BJ (cell line): ENCODE measurements at regions of chr13 and their contacts with region 1.

Region 1: GRCh38 chr13:75549262-75550158 is at the start of gene UCHL3:
- DNase-seq: peak; percentile 46
- H3K4me3 ChIP-seq: peak within 1 kb of the TSS; percentile 96
- H3K27me3 ChIP-seq: no peaks in the 10 kb centered on the region
- CTCF ChIP-seq: peak; percentile 98
- polyA plus RNA-seq, gene UCHL3: 24.4 and 39.7 TPM in 2 replicates

Region 2: DNA sequence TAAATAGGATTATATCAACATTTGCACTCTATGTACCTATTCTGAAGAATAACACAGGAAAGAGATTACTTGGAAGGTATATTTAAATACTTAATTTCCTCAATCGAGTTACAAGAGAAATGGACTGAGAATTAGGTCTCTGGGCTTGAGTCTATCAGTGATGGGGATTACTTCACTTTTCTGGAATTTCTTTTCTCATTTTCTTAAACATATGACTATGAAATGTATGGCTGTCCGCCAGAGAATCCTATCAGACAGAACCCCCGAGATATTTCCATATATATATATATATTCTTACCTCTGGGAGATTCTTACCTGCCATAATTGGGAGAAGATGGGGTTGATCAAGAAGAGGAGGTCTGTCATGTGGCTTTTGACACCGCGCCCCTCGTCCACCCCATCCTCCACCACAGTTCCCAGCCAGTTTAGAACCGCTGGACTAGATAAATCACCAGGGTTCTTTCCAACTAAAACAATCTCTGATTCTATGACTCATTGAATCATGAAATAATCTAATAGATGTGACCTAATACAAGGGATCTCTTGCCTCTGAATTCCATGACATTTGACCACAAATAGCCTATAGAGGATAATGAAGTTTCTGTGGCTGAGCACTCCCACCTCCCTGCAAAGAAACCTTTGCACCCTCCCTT is 298.9 kb before region 1 on chr13:
- CTCF ChIA-PET with region 1: no interaction called
- POLR2A ChIA-PET with region 1: no interaction called
- DNase-seq: no peak
- H3K4me3 ChIP-seq: no peak overlapping the region
- H3K27me3 ChIP-seq: peaks cover 1% of the 10 kb centered on the region; the same call in 1 of the 2 replicates
- CTCF ChIP-seq: no peak

Region 3: GRCh38 chr13:75372517-75372916 is 177.0 kb before region 1 on chr13:
- CTCF ChIA-PET with region 1: interaction called, 10 read pairs
- POLR2A ChIA-PET with region 1: no interaction called
- DNase-seq: no peak
- H3K4me3 ChIP-seq: no peak overlapping the region
- H3K27me3 ChIP-seq: no peaks in the 10 kb centered on the region
- CTCF ChIP-seq: peak; percentile 69